Activated CD8-positive, alpha-beta T cell treated with anti-CD3 and anti-CD28 coated beads, Interleukin-2, amount 10 ng/mL, durations not matched to agents 7 days and 5 days (primary cell): ENCODE measurements at regions of chr16 and their contacts with region 1.

Region 1: GRCh38 chr16:68328151-68328859 is 17.5 kb downstream of the PRMT7 start:
- DNase-seq: peak; percentile 87
- ATAC-seq: peak; percentile 95
- H3K4me3 Mint-ChIP-seq: no peak overlapping the region
- H3K27ac Mint-ChIP-seq: no peak overlapping the region
- H3K4me1 Mint-ChIP-seq: peaks cover 28% of the 10 kb centered on the region
- H3K27me3 Mint-ChIP-seq: no peaks in the 10 kb centered on the region

Region 2: DNA sequence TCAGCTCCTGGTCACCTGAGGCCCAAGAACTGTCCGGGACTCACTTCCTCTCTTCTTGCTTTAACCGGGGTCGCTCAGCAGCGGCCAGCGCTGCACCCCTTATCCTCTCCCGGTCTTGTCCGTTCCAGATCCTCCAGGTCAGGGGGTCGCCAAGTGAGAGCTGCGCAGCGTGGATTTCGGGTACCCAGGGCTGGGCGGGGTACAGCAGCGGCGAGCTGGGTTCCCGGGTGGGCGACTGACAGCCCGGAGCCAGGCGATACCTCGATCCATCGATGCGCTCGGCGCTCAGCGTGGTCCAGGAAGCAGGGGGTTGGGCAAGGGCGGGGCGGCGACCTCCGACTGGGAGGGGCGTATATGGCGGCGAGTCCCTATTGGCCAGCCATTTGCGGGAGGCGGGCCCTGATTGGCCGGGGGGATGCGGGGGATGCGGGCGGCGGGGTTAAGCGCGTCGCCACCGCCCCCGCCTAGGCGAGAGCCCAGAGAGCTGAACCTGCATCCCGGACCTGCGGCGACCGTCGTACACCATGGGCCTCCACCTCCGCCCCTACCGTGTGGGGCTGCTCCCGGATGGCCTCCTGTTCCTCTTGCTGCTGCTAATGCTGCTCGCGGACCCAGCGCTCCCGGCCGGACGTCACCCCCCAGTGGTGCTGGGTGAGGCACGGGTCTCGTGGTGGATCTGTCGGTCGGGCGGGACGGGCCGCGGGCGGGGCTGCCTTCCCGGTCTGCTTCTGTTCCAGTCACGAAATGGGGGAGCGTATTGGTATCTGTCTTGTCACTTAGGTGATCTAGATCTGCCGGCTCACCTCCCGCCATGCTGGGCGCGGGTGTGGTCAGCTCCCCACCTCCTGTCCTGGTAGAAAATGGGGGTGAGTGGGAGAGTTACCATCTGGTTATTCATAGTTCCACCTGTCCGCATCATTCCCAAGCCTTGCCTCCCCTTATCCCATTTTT is 83.1 kb before region 1 on chr16 and contains the start of gene PLA2G15:
- CTCF ChIA-PET with region 1: interaction called, 37 read pairs
- POLR2A ChIA-PET with region 1: no interaction called
- DNase-seq: peak; percentile 97
- ATAC-seq: peak; percentile 97
- H3K4me3 Mint-ChIP-seq: peak within 1 kb of the TSS; percentile 95
- H3K27ac Mint-ChIP-seq: peak within 1 kb of the TSS; percentile 78
- H3K4me1 Mint-ChIP-seq: peaks cover 27% of the 10 kb centered on the region
- H3K27me3 Mint-ChIP-seq: no peaks in the 10 kb centered on the region
- total RNA-seq, gene PLA2G15: 8.6 to 9.4 TPM

Region 3: DNA sequence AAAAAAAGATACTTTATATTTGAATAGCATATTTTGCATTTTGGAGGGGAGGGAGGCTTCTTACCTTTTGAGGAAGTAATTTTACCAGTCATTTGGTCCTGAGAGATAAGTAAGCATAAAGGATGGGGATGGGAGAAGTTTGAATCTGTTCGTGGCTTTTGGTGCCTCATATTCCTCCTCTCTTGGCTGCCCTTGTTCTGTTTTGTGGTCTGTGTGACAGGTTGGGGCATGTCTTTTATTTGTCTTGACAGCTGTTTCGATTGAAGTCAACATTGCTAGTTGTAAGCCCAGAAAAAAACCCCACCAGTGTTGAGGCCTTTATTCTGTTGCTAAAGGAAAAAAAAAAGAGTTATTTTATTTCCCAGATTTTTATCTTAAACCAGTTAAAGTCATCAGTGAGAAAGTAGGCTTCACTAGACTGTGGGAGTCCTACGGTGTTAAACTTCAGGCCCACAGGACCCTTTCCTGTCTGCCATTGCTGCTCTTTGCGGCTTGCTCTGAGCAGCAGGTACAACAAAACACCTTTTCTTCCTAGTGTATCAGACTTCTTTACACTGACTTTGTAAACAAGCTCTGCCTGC is 52.6 kb before region 1 on chr16:
- CTCF ChIA-PET with region 1: interaction called, 11 read pairs
- POLR2A ChIA-PET with region 1: no interaction called
- DNase-seq: peak; percentile 67
- ATAC-seq: peak; percentile 82
- H3K4me3 Mint-ChIP-seq: peak overlapping the region; percentile 65
- H3K27ac Mint-ChIP-seq: peak overlapping the region; percentile 89
- H3K4me1 Mint-ChIP-seq: peaks cover 72% of the 10 kb centered on the region
- H3K27me3 Mint-ChIP-seq: no peaks in the 10 kb centered on the region

Region 4: GRCh38 chr16:68298907-68299561 is 29.3 kb before region 1 on chr16:
- CTCF ChIA-PET with region 1: interaction called, 13 read pairs
- POLR2A ChIA-PET with region 1: no interaction called
- DNase-seq: no peak
- ATAC-seq: no peak
- H3K4me3 Mint-ChIP-seq: no peak overlapping the region
- H3K27ac Mint-ChIP-seq: peak overlapping the region; percentile 45
- H3K4me1 Mint-ChIP-seq: peaks cover 7% of the 10 kb centered on the region
- H3K27me3 Mint-ChIP-seq: no peaks in the 10 kb centered on the region